Sigmoid colon (tissue), 7 donors: ENCODE measurements at regions of chr10 and their contacts with region 1.

Region 1: GRCh38 chr10:931416-932318 is at the start of gene LARP4B:
- DNase-seq: peak; percentile 98
- H3K4me3 ChIP-seq: peak within 1 kb of the TSS; percentile 88 to 94 (median 90)
- H3K27ac ChIP-seq: peak within 1 kb of the TSS; percentile 96 to 99 (median 98)
- H3K4me1 ChIP-seq: peaks cover 0 to 44% (median 36%) of the 10 kb centered on the region in 4 donors
- H3K27me3 ChIP-seq: no peaks in the 10 kb centered on the region
- CTCF ChIP-seq: no peak
- EP300 ChIP-seq: peak in 1 of 4 donors; percentile 5
- POLR2A ChIP-seq: peak; percentile 17 to 19
- total RNA-seq, gene LARP4B: 31.7 to 57.6 (median 40.8) TPM

Region 2: GRCh38 chr10:987870-988666 is 56.4 kb after region 1 on chr10 and contains the start of gene GTPBP4:
- intact Hi-C with region 1: loop called (anchors 1 kb)
- DNase-seq: peak; percentile 99
- H3K4me3 ChIP-seq: peak within 1 kb of the TSS; percentile 76 to 97 (median 96)
- H3K27ac ChIP-seq: peak within 1 kb of the TSS; percentile 93 to 97 (median 94)
- H3K4me1 ChIP-seq: peaks cover 0 to 27% (median 23%) of the 10 kb centered on the region in 4 donors
- H3K27me3 ChIP-seq: no peaks in the 10 kb centered on the region
- CTCF ChIP-seq: no peak
- EP300 ChIP-seq: no peak
- POLR2A ChIP-seq: peak; percentile 60 to 67
- total RNA-seq, gene GTPBP4: 12.0 to 22.8 (median 19.6) TPM

Region 3: DNA sequence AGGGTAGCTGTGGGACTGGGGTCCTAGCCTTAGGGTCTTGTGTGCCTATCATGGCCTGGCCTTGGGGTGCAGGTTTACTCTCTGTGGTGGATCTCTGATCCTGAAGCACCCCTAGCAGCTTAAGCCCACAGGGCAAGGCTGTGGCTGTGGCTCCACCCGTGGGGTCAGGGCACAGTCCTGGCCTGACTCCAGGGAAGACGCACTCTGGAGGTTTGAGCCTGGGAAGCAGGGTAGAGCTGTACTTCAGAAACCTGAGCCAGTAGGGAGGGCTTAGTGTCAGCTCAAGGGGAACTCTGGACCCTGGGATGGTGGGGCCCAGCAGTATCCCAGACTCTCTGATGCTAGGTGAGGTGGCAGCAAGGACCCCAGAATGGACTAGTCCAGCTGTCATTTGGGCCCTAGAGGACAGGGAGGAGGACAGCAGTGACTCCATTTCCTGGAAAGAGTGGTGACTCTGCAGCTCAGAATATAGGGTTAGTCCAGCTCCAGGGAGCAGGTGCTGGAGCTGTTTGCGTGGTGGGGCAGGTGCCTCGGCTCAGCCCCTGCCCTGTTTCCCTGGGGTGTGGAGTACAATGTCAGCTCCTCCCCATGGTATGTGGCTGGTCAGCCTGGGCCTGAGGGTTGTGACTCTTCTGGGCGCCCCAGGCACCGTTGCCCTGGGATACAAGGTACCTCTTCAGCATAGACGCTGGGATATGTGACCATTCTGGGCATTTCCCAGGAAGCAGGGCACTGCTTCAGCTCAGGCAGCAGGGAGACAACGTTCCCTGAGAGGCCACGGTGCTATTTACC is 72.4 kb after region 1 on chr10:
- intact Hi-C with region 1: no loop called
- DNase-seq: no peak
- H3K4me3 ChIP-seq: no peak overlapping the region
- H3K27ac ChIP-seq: no peak overlapping the region
- H3K4me1 ChIP-seq: no peaks in the 10 kb centered on the region
- H3K27me3 ChIP-seq: no peaks in the 10 kb centered on the region
- CTCF ChIP-seq: no peak
- EP300 ChIP-seq: no peak
- POLR2A ChIP-seq: no peak